ENCODE measurements at regions of chr17 and their contacts with region 1.

Region 1: GRCh38 chr17:45894022-45894784 is at the start of gene MAPT:
- DNase-seq: peak; percentile 87 to 93
- ATAC-seq: peak; percentile 76 to 80
- H3K4me3 ChIP-seq: peak within 1 kb of the TSS; percentile 82 to 100 (median 96)
- H3K27ac ChIP-seq: peak within 1 kb of the TSS; percentile 94 to 99 (median 99)
- H3K4me1 ChIP-seq: peaks cover 25 to 26% of the 10 kb centered on the region in 2 donors
- H3K27me3 ChIP-seq: no peaks in the 10 kb centered on the region
- CTCF ChIP-seq: peak in 4 of 5 experiments; percentile 96 to 100 (median 100)
- POLR2A ChIP-seq: peak; percentile 91
- total RNA-seq, gene MAPT: 70.3 to 120 (median 82.8) TPM

Region 2: GRCh38 chr17:45948881-45949624 is 54.9 kb after region 1 on chr17:
- in situ Hi-C with region 1: loop called in 2 of 4 experiments (anchors 5 to 10 kb)
- intact Hi-C with region 1: loop called (anchors 1 kb)
- DNase-seq: peak; percentile 51 to 78
- ATAC-seq: peak; percentile 81 to 86
- H3K4me3 ChIP-seq: peak overlapping the region; percentile 0 to 42 (median 37)
- H3K27ac ChIP-seq: peak overlapping the region; percentile 69 to 88 (median 84)
- H3K4me1 ChIP-seq: peaks cover 39 to 42% of the 10 kb centered on the region in 2 donors
- H3K27me3 ChIP-seq: no peaks in the 10 kb centered on the region
- CTCF ChIP-seq: peak; percentile 70 to 91 (median 86)
- POLR2A ChIP-seq: no peak

Region 3: DNA sequence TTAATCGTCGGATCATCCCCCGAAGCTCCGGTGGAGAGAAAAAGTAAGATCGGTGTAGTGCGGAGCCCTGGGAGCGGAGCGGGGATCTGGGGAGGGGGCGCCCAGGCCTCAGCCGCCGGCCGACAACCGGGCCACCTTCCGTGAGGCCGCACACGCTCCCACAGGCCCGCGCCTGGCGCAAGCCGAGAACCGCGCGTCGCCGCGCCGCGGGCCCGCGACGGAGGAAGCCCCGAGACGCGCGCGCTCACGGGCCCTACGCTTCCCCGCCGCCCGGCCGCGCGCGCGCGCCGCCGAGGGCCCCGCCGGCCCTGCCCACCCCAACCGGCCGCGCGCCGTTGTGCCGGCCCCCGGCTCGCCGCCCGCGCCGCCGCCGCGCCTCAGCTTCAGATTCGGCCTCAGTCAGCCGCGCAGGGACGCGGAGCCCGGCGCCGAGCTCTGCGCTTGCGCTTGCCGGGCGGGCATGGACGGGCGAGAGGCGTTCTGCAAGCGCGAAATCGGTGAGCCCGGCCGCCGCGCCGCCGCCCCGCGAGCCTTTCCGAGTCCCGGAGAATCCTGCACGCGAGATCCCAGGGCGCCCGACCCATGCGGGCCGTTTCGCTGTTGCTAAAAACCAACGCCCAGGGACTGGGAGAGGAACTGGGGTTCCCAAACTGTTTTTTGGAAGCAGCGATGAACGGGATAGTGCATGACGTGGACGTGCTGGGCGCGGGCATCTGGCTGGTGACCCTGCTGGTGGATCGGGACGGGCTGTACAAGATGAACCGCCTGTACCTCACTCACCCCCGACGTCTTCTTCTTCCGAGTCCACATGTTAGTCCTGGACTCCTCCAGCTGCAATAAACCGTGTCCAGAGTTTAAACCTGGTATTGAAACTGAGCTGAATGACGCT is 372.7 kb after region 1 on chr17:
- in situ Hi-C with region 1: no loop called
- intact Hi-C with region 1: loop called (anchors 5 kb)
- DNase-seq: peak; percentile 65 to 84
- ATAC-seq: peak; percentile 85 to 88
- H3K4me3 ChIP-seq: peak overlapping the region; percentile 76 to 100 (median 90)
- H3K27ac ChIP-seq: peak overlapping the region; percentile 95 to 100 (median 95)
- H3K4me1 ChIP-seq: peaks cover 7 to 22% of the 10 kb centered on the region in 2 donors
- H3K27me3 ChIP-seq: no peaks in the 10 kb centered on the region
- CTCF ChIP-seq: peak in 1 of 5 experiments; percentile 27
- POLR2A ChIP-seq: peak; percentile 44 to 62

Measured in gastrocnemius medialis (tissue), 4 donors.